WTC11 (cell line): ENCODE measurements at regions of chr11 and their contacts with region 1.

Region 1: GRCh38 chr11:119356349-119357031 is 10.0 kb upstream of the MFRP start:
- DNase-seq: peak; percentile 91
- ATAC-seq: peak; percentile 80
- H3K4me3 Mint-ChIP-seq: peak overlapping the region; percentile 76
- H3K27ac Mint-ChIP-seq: peak overlapping the region; percentile 36
- H3K4me1 Mint-ChIP-seq: peaks cover 39% of the 10 kb centered on the region
- H3K27me3 Mint-ChIP-seq: peaks cover 19% of the 10 kb centered on the region
- CTCF ChIP-seq: peak; percentile 93

Region 2: DNA sequence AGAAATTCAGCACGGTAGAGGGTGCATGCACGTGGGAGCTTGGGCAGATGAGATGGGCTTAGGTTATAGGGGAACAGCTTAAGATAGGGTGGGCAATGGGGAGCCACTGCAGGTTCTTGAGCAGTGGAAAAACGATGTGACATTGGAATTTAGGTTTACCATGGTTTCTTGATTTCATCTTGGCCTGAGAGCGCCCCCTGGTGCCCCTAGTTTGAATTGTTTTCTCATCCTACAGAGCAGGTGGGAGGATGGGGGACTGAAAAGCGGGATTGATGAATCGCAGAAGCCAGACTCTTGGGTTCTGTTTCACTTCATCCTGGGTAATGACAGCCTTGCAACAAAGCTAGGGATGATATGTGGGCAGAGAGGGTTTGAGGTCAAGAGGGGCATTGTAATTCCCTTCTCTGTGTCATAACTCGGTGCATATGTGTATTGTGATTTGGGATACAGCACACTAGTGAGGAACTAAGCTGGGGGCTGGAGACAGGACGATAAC is 32.9 kb before region 1 on chr11:
- CTCF ChIA-PET with region 1: interaction called, 29 read pairs
- POLR2A ChIA-PET with region 1: no interaction called
- DNase-seq: peak; percentile 90
- ATAC-seq: peak; percentile 5
- H3K4me3 Mint-ChIP-seq: no peak overlapping the region; the same call in 1 of the 2 replicates
- H3K27ac Mint-ChIP-seq: no peak overlapping the region
- H3K4me1 Mint-ChIP-seq: peaks cover 32% of the 10 kb centered on the region
- H3K27me3 Mint-ChIP-seq: peaks cover 3% of the 10 kb centered on the region; the same call in 1 of the 2 replicates
- CTCF ChIP-seq: peak; percentile 86

Region 3: DNA sequence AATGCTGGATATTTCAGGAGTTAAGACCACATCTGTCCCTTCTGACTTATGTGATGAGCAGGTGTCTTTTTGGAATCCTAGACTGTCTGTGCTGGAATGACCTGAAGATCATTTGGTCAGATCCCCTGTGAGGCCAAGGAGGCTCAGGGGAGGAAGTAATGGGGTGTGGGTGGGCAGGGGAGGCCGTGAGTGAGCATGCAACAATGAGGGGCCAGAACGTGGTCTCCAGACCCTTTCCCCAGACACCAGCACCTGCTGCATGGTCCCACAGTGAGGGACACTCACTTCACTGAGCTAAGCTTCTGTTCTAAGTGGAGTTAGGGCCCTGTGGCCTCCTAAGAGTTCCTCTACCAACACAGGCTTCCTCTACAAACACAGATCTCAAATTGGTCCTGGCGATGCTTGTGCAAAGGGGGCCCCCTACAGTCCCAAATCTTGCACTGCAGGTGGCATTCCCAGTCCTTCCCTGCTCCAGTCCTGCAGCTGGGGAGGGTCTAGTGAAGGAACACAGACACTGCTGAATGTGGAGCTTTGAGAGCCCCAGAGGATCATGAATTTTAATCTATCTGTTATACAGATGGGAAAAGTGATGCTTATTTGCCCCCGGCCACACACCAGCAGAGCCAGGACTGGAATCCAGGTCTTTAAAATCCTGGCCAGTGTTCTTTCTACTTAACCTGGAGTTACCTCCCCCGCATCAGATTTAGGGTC is 17.6 kb after region 1 on chr11:
- CTCF ChIA-PET with region 1: interaction called, 190 read pairs
- POLR2A ChIA-PET with region 1: interaction called, 4 read pairs
- DNase-seq: peak; percentile 92
- ATAC-seq: peak; percentile 71
- H3K4me3 Mint-ChIP-seq: no peak overlapping the region
- H3K27ac Mint-ChIP-seq: no peak overlapping the region
- H3K4me1 Mint-ChIP-seq: peaks cover 74% of the 10 kb centered on the region
- H3K27me3 Mint-ChIP-seq: peaks cover 1% of the 10 kb centered on the region; the same call in 1 of the 2 replicates
- CTCF ChIP-seq: peak; percentile 79

Region 4: DNA sequence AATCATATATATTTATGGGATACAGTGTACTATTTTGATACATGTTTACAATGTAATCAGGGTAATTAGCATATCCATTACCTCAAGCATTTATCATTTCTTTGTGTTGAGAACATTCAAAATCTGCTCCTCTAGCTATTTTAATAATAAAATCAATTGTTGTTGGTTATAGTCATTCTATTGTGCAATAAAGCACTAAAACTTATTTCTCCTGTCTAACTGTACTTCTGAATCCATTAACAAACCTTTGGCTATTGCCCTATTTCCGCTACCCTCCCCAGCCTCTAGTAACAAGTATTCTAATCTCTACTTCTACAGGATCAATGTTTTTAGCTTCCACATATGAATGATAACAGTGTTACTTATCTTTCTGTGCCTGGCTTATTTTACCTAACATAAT is 40.3 kb after region 1 on chr11:
- CTCF ChIA-PET with region 1: interaction called, 11 read pairs
- POLR2A ChIA-PET with region 1: no interaction called
- DNase-seq: no peak
- ATAC-seq: no peak
- H3K4me3 Mint-ChIP-seq: no peak overlapping the region
- H3K27ac Mint-ChIP-seq: no peak overlapping the region
- H3K4me1 Mint-ChIP-seq: peaks cover 6% of the 10 kb centered on the region
- H3K27me3 Mint-ChIP-seq: peaks cover 3% of the 10 kb centered on the region; the same call in 1 of the 2 replicates
- CTCF ChIP-seq: no peak

Region 5: DNA sequence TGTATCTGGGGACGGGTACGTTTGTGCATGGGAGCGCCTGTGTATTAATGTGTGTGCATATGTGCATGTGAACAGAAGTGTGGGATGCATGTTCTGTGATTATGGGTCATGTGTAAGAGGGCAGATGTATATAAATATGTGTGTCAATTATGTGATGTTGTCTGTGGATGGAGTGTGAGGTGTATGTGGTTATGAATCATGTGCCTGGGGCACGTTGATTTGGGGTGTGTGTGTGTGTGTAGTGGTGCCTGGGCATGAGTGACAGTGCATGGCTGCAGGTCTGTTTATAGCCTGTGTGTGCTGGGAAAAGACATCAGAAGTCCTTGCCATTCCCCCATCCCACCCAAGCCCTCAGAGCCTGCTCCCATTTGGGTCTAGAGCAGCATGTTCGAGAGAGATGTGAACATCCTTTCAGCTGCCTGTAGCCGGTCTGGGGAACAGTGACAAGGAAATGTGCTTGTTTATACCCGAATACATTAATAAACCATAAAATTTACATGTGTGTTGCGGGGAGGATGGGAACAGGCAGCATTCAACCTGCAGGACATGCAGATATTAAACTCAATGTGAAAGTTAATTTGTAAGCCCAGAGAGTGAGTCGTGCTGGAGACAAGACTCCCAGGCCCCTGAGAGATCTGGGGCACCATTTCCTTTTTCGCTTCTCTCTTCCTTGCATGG is 243.5 kb after region 1 on chr11:
- CTCF ChIA-PET with region 1: no interaction called
- POLR2A ChIA-PET with region 1: no interaction called
- DNase-seq: no peak
- ATAC-seq: no peak
- H3K4me3 Mint-ChIP-seq: no peak overlapping the region
- H3K27ac Mint-ChIP-seq: no peak overlapping the region
- H3K4me1 Mint-ChIP-seq: peaks cover 12% of the 10 kb centered on the region
- H3K27me3 Mint-ChIP-seq: peaks cover 16% of the 10 kb centered on the region
- CTCF ChIP-seq: no peak